Aorta (tissue), 5 donors: ENCODE measurements at regions of chr12 and their contacts with region 1.

Region 1: DNA sequence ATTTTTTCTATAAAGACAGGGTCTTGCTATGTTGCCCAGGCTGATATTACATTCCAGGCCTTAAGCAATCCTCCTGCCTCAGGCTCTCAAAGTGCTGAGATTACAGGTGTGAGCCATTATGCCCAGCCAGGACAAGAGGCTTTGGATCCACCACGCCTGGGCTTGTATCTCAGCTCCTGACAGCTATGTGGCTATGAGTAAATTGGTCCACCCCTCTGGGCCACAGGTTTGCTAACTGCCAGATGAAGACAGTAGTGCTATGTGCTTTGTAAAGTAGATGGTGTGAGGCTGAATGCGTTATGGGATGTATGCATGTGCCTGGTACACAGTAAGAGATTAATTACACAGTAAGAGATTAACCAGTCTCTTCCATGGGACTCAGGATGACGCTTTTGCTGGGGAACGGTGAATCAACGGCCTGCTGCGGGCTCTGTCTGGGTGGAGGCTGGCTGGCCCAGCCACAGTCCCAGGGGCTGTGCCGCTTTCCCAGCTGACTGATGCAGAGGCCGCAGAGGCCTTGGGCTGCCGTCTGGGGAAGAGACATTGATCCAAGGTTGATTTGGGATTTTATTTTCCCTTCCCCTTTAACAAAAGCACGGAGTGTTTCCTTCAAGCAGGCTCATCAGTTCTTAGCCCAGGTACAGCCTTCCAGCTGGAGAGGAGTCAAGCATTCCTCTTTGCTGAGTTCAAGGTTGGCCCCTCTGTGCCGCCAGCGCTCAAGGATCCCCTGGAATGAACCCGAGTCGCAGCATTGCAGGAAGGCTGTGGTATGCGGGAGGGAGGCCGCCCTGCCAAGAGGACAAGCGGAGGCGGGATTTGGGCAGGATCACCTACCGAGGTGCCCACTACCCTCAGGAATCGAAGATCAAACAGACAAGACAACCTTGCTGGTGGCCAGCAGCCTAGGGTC is 53.6 kb upstream of the NCOR2 start:
- DNase-seq: peak; percentile 86 to 90
- ATAC-seq: peak; percentile 71
- H3K4me3 ChIP-seq: no peak overlapping the region
- H3K27ac ChIP-seq: peak overlapping the region in 1 of 2 donors; percentile 68
- H3K4me1 ChIP-seq: no peaks in the 10 kb centered on the region
- H3K27me3 ChIP-seq: no peaks in the 10 kb centered on the region

Region 2: DNA sequence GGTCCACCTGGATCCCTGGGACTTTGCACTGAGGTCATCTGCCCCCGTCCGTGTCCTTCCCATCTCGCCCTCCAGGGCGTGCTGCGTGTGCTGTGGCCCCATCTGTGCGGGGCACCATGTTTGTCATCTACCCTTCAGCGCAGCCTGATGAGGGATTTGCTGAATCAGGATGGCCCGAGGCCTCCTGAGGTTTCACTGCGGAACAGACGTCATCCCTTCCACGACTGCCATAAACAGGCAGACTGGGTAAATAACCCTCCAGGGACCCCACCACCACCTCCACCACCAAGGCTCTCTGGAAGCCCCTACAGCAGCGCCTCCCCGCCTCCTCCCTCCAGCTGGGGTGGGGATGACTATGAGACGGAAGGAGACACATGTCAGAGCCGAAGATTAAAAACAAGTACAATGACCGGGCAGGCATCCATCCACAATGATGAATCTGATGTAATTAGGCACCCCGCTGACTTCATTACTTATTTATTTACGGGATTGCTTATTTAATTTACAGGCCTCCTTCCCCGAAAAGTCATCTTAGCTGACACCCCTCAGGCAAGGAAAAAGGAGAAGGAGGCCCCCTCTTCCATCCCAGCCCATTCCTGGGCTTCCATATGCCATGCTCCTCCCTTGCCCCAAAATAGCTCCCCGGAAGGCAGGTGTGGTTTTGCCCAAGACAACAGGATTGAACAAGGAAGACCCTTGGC is 93.0 kb before region 1 on chr12:
- intact Hi-C with region 1: no loop called
- DNase-seq: peak in 1 of 2 donors; percentile 72
- ATAC-seq: no peak
- H3K4me3 ChIP-seq: no peak overlapping the region
- H3K27ac ChIP-seq: no peak overlapping the region
- H3K4me1 ChIP-seq: no peaks in the 10 kb centered on the region
- H3K27me3 ChIP-seq: no peaks in the 10 kb centered on the region

Region 3: DNA sequence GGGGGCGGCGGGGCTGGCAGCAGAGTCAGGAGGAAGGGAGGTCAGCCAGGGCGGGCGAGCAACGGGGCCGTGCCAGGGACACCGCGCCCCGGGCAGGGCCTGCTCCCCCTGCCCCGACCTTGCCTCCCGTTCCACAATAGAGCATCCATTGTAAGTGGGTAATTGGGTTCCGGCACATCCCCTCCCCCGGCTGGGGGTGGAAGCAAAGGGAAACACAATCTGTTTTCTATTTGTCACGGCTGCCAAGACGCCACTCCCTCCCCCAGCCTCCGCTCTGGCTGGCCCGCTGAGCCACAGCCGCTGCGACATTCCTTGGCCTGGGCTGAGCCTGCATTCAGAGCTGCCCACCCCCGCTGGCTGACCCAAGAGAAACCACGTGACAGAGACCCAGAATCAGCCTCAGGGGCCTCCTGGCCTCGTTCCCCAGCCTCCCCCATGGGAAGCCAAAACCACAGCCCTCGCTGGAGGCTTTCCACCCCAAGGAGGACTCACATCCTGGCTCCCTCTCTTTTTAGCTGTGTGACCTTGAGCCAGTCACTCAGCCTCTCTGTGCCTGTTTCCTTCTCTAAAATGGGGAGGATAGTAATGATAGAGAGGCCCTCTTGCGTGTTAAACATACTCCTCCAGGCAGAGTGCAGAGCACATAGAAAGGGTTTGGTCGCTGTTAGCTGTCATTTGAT is 125.0 kb after region 1 on chr12:
- intact Hi-C with region 1: loop called in 1 of 2 experiments (anchors 5 kb)
- DNase-seq: peak; percentile 96 to 97
- ATAC-seq: peak; percentile 95
- H3K4me3 ChIP-seq: no peak overlapping the region
- H3K27ac ChIP-seq: peak overlapping the region; percentile 24 to 72
- H3K4me1 ChIP-seq: no peaks in the 10 kb centered on the region
- H3K27me3 ChIP-seq: no peaks in the 10 kb centered on the region